K562 (cell line): ENCODE measurements at regions of chr10 and their contacts with region 1.

Region 1: DNA sequence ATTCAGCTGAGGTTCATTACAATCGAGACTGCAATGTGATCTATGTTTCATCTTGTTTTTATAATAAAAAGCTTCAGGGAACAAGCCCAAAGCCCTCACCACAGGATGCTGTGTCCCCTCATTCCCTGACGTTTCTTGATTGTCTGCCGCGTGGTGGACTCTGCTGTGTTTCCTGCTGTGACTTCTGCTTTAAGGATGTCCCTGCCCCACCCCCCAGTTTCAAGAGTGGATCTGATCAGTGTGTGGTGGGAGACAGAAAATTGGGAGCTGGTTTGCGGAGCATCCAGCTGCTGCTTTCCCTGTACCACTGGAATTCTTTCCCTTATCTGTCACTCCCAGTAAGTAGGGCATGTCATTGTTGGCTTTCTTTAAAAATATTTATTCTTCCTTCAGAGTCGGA is 86.2 kb downstream of the CREM start:
- DNase-seq: no peak
- ATAC-seq: no peak
- H3K4me3 ChIP-seq: no peak overlapping the region
- H3K27ac ChIP-seq: no peak overlapping the region
- H3K4me1 ChIP-seq: peaks cover 0 to 4% of the 10 kb centered on the region in 2 experiments; a peak in 2 of 5 replicates
- H3K27me3 ChIP-seq: no peaks in the 10 kb centered on the region
- CTCF ChIP-seq: no peak
- EP300 ChIP-seq: no peak
- POLR2A ChIP-seq: no peak
- RAD21 ChIP-seq: no peak

Region 2: DNA sequence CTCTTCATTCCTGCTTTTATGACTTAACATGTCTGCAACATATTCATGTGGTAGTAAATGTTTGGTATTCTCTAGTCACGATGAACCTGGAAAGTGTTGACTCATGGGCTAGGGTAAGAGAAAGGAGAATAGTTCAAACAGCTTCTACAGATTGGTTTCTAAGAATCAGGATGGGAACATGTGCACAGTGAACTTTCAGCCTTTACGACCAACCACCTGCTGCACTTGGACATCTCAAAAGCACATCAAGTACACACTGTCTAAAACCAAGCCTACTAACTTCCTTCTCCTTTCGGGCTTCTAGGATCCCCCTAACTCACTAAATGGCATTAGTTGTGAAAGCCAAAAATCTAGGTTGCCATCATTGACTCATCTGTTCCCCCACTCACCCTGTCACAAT is 208.2 kb before region 1 on chr10:
- CTCF ChIA-PET with region 1: no interaction called
- POLR2A ChIA-PET with region 1: no interaction called
- in situ Hi-C with region 1: loop called (anchors 5 kb)
- intact Hi-C with region 1: no loop called
- DNase-seq: no peak
- ATAC-seq: peak; percentile 31
- H3K4me3 ChIP-seq: no peak overlapping the region
- H3K27ac ChIP-seq: no peak overlapping the region
- H3K4me1 ChIP-seq: peaks cover 0 to 4% of the 10 kb centered on the region in 2 experiments; a peak in 3 of 5 replicates
- H3K27me3 ChIP-seq: no peaks in the 10 kb centered on the region
- CTCF ChIP-seq: no peak
- EP300 ChIP-seq: no peak
- POLR2A ChIP-seq: no peak
- RAD21 ChIP-seq: no peak

Region 3: DNA sequence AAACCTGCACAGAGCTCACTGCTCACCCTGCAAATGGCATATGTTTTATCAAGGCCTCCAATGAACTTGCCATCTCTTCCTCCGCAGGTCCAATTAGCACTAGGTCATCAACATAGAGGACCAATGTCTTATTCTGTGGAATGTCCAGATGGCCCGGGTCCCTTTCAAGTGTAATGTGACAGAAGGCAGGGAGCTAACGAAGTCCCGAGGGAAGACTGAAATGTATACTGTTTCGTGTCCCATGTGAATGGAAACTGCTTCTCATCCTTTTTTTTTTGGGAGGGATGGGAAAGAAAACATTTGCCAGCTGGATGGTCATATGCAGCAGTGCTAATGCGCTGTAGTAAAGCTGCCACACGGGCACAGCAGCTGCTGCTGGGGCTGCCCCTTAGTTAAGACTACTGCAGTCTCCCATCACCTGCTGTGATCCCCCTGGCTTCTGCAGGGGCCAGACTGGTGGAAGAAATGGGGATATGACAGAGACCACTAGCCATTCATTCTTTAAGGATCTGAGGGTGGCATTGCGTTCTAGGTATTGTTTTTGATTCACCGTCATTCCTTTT is 61.7 kb after region 1 on chr10:
- CTCF ChIA-PET with region 1: no interaction called
- POLR2A ChIA-PET with region 1: no interaction called
- in situ Hi-C with region 1: no loop called
- intact Hi-C with region 1: no loop called
- DNase-seq: no peak
- ATAC-seq: no peak
- H3K4me3 ChIP-seq: no peak overlapping the region
- H3K27ac ChIP-seq: no peak overlapping the region
- H3K4me1 ChIP-seq: peaks cover 0 to 4% of the 10 kb centered on the region in 2 experiments; a peak in 1 of 5 replicates
- H3K27me3 ChIP-seq: 0 out of 5 replicates have a peak, but pooled peaks cover 0 to 5% of the 10 kb centered on the region in 2 experiments
- CTCF ChIP-seq: no peak
- EP300 ChIP-seq: no peak
- POLR2A ChIP-seq: no peak
- RAD21 ChIP-seq: no peak